Caco-2 (cell line): ENCODE measurements at regions of chr2 and their contacts with region 1.

Region 1: GRCh38 chr2:25936889-25937545 is 45.3 kb downstream of the KIF3C start:
- DNase-seq: no peak
- H3K4me3 ChIP-seq: no peak overlapping the region
- H3K4me3 Mint-ChIP-seq: no peak overlapping the region
- H3K27ac Mint-ChIP-seq: no peak overlapping the region
- H3K4me1 ChIP-seq: peaks cover 16% of the 10 kb centered on the region
- H3K4me1 Mint-ChIP-seq: peaks cover 11% of the 10 kb centered on the region
- H3K27me3 ChIP-seq: no peaks in the 10 kb centered on the region
- H3K27me3 Mint-ChIP-seq: no peaks in the 10 kb centered on the region
- CTCF ChIP-seq: no peak

Region 2: GRCh38 chr2:25707927-25708590 is 229.0 kb before region 1 on chr2:
- CTCF ChIA-PET with region 1: no interaction called
- POLR2A ChIA-PET with region 1: no interaction called
- intact Hi-C with region 1: no loop called
- DNase-seq: peak; percentile 45 to 55
- H3K4me3 ChIP-seq: no peak overlapping the region
- H3K4me3 Mint-ChIP-seq: no peak overlapping the region
- H3K27ac Mint-ChIP-seq: no peak overlapping the region
- H3K4me1 ChIP-seq: 0 out of 2 replicates have a peak, but pooled peaks cover 3% of the 10 kb centered on the region
- H3K4me1 Mint-ChIP-seq: peaks cover 7% of the 10 kb centered on the region
- H3K27me3 ChIP-seq: no peaks in the 10 kb centered on the region
- H3K27me3 Mint-ChIP-seq: no peaks in the 10 kb centered on the region
- CTCF ChIP-seq: no peak

Region 3: DNA sequence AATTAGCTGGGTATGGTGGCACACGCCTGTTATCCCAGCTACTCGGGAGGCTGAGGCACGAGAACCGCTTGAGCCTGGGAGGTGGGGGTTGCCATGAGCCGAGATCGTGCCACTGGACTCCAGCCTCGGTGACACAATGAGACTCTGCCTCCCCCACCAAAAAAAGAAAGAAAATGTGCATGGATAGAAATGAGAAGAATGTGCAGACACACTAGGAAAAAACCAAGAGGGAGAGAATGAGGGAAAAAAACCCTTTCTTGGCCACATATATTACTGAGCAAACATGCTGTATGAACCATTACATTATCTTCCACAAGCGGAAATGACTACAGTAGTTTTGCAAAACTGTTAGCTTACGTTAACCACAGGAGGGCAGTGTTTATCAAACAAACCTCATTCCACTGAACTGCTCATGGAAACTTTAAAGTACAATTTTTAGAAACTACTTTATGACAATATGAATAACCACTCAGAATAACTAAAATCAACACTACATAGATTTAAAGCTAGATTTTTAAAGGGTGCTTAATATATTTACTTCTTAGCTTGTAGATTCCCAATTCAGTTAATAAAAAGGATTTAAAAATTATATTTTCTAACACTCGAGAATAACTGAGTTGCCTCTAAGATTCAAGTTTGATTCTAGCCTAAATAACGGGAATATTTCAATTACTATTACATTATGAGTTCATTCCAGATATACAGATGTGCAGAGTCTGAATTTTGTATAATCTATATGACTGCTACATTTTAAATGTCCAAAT is 85.1 kb before region 1 on chr2:
- CTCF ChIA-PET with region 1: no interaction called
- POLR2A ChIA-PET with region 1: no interaction called
- intact Hi-C with region 1: loop called (anchors 5 kb)
- DNase-seq: peak in 1 of 2 experiments; percentile 56
- H3K4me3 ChIP-seq: no peak overlapping the region
- H3K4me3 Mint-ChIP-seq: no peak overlapping the region
- H3K27ac Mint-ChIP-seq: no peak overlapping the region
- H3K4me1 ChIP-seq: no peaks in the 10 kb centered on the region; the same call in 1 of the 2 replicates
- H3K4me1 Mint-ChIP-seq: peaks cover 7% of the 10 kb centered on the region
- H3K27me3 ChIP-seq: no peaks in the 10 kb centered on the region
- H3K27me3 Mint-ChIP-seq: no peaks in the 10 kb centered on the region
- CTCF ChIP-seq: peak; percentile 69 to 70